Activated naive CD4-positive, alpha-beta T cell treated with anti-CD3 and anti-CD28 coated beads for 36 hours (primary cell): ENCODE measurements at regions of chr17 and their contacts with region 1.

Region 1: DNA sequence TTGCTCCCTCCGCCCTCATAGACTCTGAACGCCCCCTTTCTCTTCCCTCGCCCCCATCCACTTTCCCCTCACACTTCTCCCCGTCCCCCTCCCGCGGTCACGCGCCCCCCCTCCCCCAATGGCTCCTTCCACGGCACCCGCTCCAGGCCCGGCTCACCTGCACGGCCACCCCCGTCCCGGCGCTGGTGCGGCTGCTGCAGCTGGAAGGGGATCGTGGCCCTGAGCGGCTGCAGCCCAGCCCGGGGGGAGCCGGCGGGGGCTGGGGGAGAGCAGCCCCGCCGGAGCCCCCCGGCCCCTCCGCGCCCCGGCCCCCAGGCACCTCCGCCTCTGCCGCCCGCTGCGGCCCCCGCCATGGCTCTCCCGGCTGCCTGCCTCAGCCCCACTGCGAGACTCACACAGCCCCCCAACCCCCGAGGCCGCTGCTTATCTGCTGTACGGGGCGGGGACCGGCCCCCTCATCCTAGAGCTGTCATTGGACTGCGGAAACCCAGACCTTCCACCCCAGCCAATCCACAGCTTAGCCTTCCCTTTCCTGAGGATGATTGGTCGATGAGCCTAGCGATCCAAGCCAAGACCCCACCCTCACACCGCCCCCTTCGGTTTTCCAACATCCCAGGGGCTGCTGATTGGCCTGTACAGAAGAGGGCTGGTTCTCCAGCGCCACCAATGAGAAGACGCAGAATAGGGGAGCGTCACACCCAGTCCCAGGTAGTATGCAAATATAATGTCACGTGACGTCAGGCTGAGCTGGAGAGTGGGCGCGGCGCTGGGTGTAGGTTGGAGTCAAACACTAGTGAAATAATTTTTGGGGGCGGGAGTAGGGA is at the start of gene FAM117A:
- DNase-seq: peak; percentile 99
- H3K4me3 Mint-ChIP-seq: peak within 1 kb of the TSS; percentile 88
- H3K27ac Mint-ChIP-seq: peak within 1 kb of the TSS; percentile 83
- H3K4me1 Mint-ChIP-seq: peaks cover 47% of the 10 kb centered on the region
- H3K27me3 Mint-ChIP-seq: no peaks in the 10 kb centered on the region
- total RNA-seq, gene FAM117A: 17.7 TPM

Region 2: GRCh38 chr17:49582789-49583188 is 181.2 kb before region 1 on chr17:
- CTCF ChIA-PET with region 1: no interaction called
- intact Hi-C with region 1: no loop called
- DNase-seq: no peak
- H3K4me3 Mint-ChIP-seq: no peak overlapping the region
- H3K27ac Mint-ChIP-seq: no peak overlapping the region
- H3K4me1 Mint-ChIP-seq: peaks cover 5% of the 10 kb centered on the region
- H3K27me3 Mint-ChIP-seq: peaks cover 7% of the 10 kb centered on the region

Region 3: DNA sequence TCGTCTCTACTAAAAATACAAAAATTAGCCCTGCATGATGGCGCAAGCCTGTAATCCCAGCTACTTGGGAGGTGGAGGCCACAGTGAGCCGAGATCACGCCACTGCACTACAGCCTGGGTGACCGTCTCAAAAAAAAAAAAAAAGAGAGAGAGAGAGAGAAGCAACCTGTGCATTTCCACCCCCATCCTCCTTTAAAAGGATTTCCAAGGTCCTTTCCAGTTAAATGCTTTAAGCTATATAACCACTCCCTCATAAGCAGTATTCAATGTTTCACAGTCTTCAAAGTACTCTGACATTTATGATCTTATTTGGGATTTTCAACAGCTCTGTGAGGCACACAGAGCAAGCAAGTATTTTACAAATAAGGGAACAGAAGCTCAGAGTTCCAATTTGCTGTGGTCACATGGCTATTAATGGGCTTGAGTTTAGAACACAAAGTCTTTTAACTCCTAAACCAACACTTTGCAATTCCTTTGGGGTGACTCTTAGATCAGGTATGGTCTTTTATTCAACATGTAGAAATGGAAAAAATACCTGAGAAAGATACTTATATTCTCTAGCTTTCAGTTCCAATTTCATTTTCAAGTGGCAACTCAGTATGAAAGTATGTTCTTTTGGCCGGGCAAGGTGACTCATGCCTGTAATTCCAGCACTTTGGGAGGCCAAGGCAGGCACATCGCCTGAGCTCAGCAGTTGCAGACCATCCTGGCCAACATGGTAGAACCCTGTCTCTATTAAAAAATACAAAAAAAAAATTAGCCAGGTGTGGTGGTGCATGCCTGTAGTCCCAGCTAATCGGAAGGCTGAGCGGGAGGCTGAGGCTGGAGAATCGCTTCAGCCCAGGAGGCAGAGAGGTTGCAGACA is 117.3 kb before region 1 on chr17:
- CTCF ChIA-PET with region 1: no interaction called
- intact Hi-C with region 1: loop called (anchors 5 kb)
- DNase-seq: peak; percentile 81
- H3K4me3 Mint-ChIP-seq: no peak overlapping the region
- H3K27ac Mint-ChIP-seq: peak overlapping the region; percentile 76
- H3K4me1 Mint-ChIP-seq: peaks cover 63% of the 10 kb centered on the region
- H3K27me3 Mint-ChIP-seq: no peaks in the 10 kb centered on the region

Region 4: DNA sequence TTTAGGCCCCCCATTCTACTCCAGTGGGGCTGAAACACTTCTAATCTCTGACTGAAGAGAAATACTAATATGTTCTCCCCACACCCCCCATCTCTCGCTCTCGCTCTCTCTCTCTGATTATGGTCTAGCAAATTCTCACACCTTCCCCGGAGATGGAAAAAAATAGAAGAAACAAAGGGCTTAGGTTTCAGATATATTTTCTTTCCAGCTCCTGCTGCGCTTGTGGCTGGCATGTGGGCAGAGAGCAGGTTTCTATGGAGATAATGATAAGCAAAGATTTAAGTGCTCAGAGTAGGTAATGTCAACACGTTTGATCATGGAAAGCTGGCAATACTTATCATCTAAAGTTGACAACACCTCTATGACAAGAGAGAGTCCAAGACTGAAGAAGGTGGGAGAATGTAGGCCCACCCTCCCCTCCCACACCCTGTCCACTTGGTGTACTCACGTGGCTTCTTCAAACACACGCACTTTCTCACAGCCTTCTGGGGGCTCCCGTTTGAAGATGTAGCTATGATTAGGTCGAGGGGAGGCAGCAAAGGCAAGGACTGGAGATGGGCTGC is 48.1 kb before region 1 on chr17:
- CTCF ChIA-PET with region 1: interaction called, 32 read pairs
- intact Hi-C with region 1: loop called (anchors 1 kb)
- DNase-seq: peak; percentile 46
- H3K4me3 Mint-ChIP-seq: no peak overlapping the region
- H3K27ac Mint-ChIP-seq: peak overlapping the region; percentile 77
- H3K4me1 Mint-ChIP-seq: peaks cover 37% of the 10 kb centered on the region
- H3K27me3 Mint-ChIP-seq: no peaks in the 10 kb centered on the region

Region 5: GRCh38 chr17:49739641-49740271 is 24.2 kb before region 1 on chr17:
- CTCF ChIA-PET with region 1: interaction called, 10 read pairs
- intact Hi-C with region 1: loop called (anchors 1 kb)
- DNase-seq: peak; percentile 92
- H3K4me3 Mint-ChIP-seq: peak overlapping the region; percentile 84
- H3K27ac Mint-ChIP-seq: peak overlapping the region; percentile 99
- H3K4me1 Mint-ChIP-seq: peaks cover 73% of the 10 kb centered on the region
- H3K27me3 Mint-ChIP-seq: no peaks in the 10 kb centered on the region

Region 6: DNA sequence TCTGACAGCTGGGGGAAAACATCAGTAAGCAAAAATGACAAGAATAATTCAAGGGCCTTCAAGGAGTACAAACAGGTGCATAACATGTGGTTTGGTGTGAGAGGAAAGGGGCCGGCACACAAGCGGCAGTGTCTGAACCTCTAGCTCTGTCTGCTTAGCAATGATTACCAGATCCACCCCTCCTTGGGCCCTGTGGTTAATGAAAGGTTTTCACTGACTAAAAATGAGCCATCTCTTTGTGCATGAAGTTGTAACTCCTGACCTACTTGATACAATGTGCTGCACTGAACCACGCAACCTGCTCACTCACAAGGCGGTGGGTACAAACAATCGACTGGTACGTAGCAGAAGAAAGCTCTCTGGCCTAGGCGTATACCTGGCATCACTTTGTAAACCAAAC is 15.2 kb before region 1 on chr17:
- CTCF ChIA-PET with region 1: interaction called, 10 read pairs
- intact Hi-C with region 1: loop called (anchors 1 kb)
- DNase-seq: peak; percentile 86
- H3K4me3 Mint-ChIP-seq: peak overlapping the region; percentile 14
- H3K27ac Mint-ChIP-seq: peak overlapping the region; percentile 91
- H3K4me1 Mint-ChIP-seq: peaks cover 78% of the 10 kb centered on the region
- H3K27me3 Mint-ChIP-seq: no peaks in the 10 kb centered on the region

Region 7: GRCh38 chr17:49798182-49798581 is 34.2 kb after region 1 on chr17:
- CTCF ChIA-PET with region 1: no interaction called
- intact Hi-C with region 1: no loop called
- DNase-seq: peak; percentile 12
- H3K4me3 Mint-ChIP-seq: no peak overlapping the region
- H3K27ac Mint-ChIP-seq: no peak overlapping the region
- H3K4me1 Mint-ChIP-seq: peaks cover 46% of the 10 kb centered on the region
- H3K27me3 Mint-ChIP-seq: no peaks in the 10 kb centered on the region